ENCODE measurements at regions of chr4 and their contacts with region 1.

Region 1: GRCh38 chr4:15778289-15779241 is at the start of gene CD38:
- DNase-seq: peak; percentile 90
- H3K4me3 Mint-ChIP-seq: peak within 1 kb of the TSS; percentile 94
- H3K27ac Mint-ChIP-seq: peak within 1 kb of the TSS; percentile 97
- H3K4me1 Mint-ChIP-seq: peaks cover 68% of the 10 kb centered on the region
- H3K27me3 Mint-ChIP-seq: no peaks in the 10 kb centered on the region
- total RNA-seq, gene CD38: 89.6 and 103 TPM in 2 replicates

Region 2: GRCh38 chr4:15197005-15197404 is 581.6 kb before region 1 on chr4:
- intact Hi-C with region 1: no loop called
- DNase-seq: no peak
- H3K4me3 Mint-ChIP-seq: no peak overlapping the region
- H3K27ac Mint-ChIP-seq: no peak overlapping the region
- H3K4me1 Mint-ChIP-seq: no peaks in the 10 kb centered on the region
- H3K27me3 Mint-ChIP-seq: no peaks in the 10 kb centered on the region

Region 3: DNA sequence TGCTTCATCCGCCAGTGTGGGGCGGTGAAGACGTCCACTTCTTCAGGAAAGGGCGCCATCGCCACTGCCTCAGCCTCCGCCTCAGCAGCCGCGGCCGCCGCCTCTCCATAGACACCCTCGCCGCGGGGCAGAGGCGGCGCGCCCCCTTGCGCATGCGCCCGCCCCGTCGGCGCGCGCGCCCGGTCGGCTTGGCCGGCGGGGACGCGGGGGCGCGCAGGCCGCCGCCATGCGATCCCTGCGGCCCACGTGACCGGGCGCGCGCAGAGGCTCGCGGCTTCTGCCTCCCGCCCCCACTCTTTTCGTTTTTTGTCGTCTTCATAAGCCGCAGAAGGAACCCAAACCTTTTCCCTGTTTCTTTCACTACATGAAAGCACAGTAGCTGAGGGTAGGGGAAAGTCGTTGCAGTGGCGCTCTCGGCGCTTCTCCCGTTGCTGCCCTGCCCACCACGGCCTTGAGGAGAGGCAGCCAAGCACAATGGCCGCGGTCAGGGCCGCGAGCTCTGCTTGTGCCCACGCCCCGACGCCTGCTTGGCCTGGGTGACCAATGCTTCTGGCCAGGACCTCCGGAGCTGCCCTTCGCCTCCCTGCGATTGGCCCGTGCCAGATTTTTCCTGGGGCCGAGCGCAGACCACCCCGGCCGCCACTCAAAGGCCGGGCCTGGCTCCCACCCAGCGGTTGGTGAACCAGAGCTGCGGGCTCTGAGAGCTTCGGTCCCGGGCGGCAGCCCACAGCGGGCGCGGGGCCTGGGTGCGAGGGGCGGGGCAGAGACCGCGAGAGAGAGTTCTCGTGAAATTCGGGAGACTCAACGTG is 123.1 kb before region 1 on chr4 and contains the start of gene FBXL5:
- intact Hi-C with region 1: loop called (anchors 5 kb)
- DNase-seq: peak; percentile 96
- H3K4me3 Mint-ChIP-seq: peak within 1 kb of the TSS; percentile 99
- H3K27ac Mint-ChIP-seq: peak within 1 kb of the TSS; percentile 96
- H3K4me1 Mint-ChIP-seq: peaks cover 55% of the 10 kb centered on the region
- H3K27me3 Mint-ChIP-seq: peaks cover 1% of the 10 kb centered on the region
- total RNA-seq, gene FBXL5: 28.9 and 31.2 TPM in 2 replicates

Region 4: DNA sequence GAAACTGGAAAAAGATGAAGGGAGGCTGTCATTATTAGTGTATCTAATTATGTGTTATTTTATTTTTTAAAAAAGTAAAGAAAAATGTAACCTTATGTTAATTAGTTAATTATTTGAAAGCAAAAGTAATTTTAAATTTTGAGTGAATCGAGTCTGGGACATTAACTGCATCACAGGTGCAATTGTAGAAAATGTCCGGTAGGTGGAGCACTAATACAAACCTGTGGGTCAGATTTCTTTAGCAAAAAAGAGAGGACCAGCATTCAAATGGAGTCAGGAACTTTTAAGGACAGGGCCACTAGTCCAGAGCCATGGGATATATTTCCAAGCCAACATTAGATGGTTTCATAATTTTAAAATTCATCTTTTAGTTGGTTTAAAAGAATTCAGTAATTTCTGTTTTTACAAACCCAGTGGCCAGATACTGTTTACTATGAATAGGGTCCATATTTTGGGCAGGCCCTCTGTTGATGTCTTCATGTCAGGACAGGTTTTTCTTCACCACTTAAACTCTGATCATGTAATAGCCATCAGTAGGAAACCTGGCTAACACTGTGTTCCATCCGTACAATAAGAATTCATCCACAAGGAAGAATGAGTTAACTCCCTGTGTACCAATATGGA is 48.5 kb before region 1 on chr4:
- intact Hi-C with region 1: loop called (anchors 2 kb)
- DNase-seq: peak; percentile 81
- H3K4me3 Mint-ChIP-seq: no peak overlapping the region
- H3K27ac Mint-ChIP-seq: no peak overlapping the region
- H3K4me1 Mint-ChIP-seq: peaks cover 21% of the 10 kb centered on the region
- H3K27me3 Mint-ChIP-seq: peaks cover 2% of the 10 kb centered on the region

Region 5: DNA sequence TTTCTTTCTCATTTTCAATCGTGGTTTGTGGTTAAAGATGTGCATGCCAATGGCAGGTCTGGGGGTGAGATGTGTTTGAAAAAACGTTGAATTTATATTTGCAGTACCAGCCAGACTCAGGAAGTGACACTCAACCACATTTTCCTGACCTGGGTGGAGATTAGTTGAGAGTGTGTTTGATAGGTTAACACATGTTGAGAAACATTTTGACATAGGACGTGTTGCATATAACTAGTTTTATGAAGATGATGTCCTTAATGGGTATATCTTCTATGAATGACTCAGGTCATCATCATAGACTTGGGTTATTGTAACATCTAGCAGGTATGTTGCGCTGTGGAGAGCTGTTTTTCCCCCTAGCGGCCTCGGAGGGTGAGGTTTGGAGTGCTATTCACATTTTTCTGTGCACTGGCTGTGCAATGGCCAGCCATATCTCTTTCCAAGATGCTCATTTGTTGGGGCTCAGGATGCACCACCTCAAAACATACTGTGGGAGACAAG is 22.2 kb before region 1 on chr4:
- intact Hi-C with region 1: loop called (anchors 1 kb)
- DNase-seq: peak; percentile 92
- H3K4me3 Mint-ChIP-seq: peak overlapping the region; percentile 77
- H3K27ac Mint-ChIP-seq: peak overlapping the region; percentile 94
- H3K4me1 Mint-ChIP-seq: peaks cover 51% of the 10 kb centered on the region
- H3K27me3 Mint-ChIP-seq: no peaks in the 10 kb centered on the region

Region 6: DNA sequence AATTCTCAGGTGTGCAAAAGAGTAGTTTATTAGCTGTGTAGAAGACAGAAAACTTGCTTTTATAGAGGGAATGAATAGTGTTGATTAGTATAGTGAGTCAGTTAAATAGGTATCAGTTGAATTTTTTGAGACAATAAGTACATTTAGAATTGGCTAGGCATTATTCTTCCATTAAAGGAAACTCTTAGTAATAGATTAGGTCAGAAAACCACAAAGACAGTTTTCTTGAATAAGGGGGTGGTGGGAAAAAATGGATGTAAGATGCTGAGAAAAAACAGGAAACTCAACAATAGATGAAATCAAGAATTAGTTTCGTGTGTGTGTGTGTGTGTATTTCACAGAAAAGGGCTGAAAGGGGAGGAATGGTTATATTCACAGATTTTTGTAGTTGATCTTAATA is 16.3 kb after region 1 on chr4:
- intact Hi-C with region 1: loop called (anchors 1 kb)
- DNase-seq: no peak
- H3K4me3 Mint-ChIP-seq: peak overlapping the region; percentile 49
- H3K27ac Mint-ChIP-seq: peak overlapping the region; percentile 79
- H3K4me1 Mint-ChIP-seq: peaks cover 50% of the 10 kb centered on the region
- H3K27me3 Mint-ChIP-seq: peaks cover 1% of the 10 kb centered on the region

Region 7: GRCh38 chr4:16104520-16104919 is 326.0 kb after region 1 on chr4:
- intact Hi-C with region 1: no loop called
- DNase-seq: no peak
- H3K4me3 Mint-ChIP-seq: no peak overlapping the region
- H3K27ac Mint-ChIP-seq: no peak overlapping the region
- H3K4me1 Mint-ChIP-seq: no peaks in the 10 kb centered on the region
- H3K27me3 Mint-ChIP-seq: peaks cover 11% of the 10 kb centered on the region

Region 8: GRCh38 chr4:17336524-17336961 is 1558.0 kb after region 1 on chr4:
- intact Hi-C with region 1: loop called (anchors 10 kb)
- DNase-seq: peak; percentile 94
- H3K4me3 Mint-ChIP-seq: peak overlapping the region; percentile 60
- H3K27ac Mint-ChIP-seq: peak overlapping the region; percentile 92
- H3K4me1 Mint-ChIP-seq: peaks cover 38% of the 10 kb centered on the region
- H3K27me3 Mint-ChIP-seq: peaks cover 7% of the 10 kb centered on the region